ENCODE measurements at regions of chr21 and their contacts with region 1.

Region 1: GRCh38 chr21:32770871-32771523 is 558 bp downstream of the PAXBP1 start:
- DNase-seq: peak in 7 of 10 donors; percentile 5 to 56 (median 38)
- H3K4me3 ChIP-seq: peak overlapping the region; percentile 48 to 97 (median 85)
- H3K27ac ChIP-seq: peak overlapping the region in 57 of 59 donors; percentile 36 to 97 (median 86)
- H3K27me3 ChIP-seq: no peaks in the 10 kb centered on the region
- CTCF ChIP-seq: peak in 2 of 56 donors; percentile 7 to 11

Region 2: GRCh38 chr21:32612075-32612998 is 158.7 kb before region 1 on chr21 and contains the start of gene CFAP298:
- intact Hi-C with region 1: loop called in 1 of 2 experiments (anchors 1 kb)
- DNase-seq: peak; percentile 75 to 94 (median 90)
- H3K4me3 ChIP-seq: peak within 1 kb of the TSS; percentile 64 to 99 (median 94)
- H3K27ac ChIP-seq: peak within 1 kb of the TSS; percentile 14 to 98 (median 90)
- H3K27me3 ChIP-seq: no peaks in the 10 kb centered on the region
- CTCF ChIP-seq: peak in 13 of 56 donors; percentile 3 to 39 (median 22)
- total RNA-seq, gene CFAP298: 25.7 to 54.3 (median 36.0) TPM

Region 3: GRCh38 chr21:32727687-32728455 is 43.1 kb before region 1 on chr21 and contains the start of gene SYNJ1:
- intact Hi-C with region 1: loop called (anchors 1 to 2 kb)
- DNase-seq: peak; percentile 85 to 98 (median 93)
- H3K4me3 ChIP-seq: peak within 1 kb of the TSS; percentile 69 to 100 (median 96)
- H3K27ac ChIP-seq: peak within 1 kb of the TSS; percentile 63 to 98 (median 92)
- H3K27me3 ChIP-seq: no peaks in the 10 kb centered on the region
- CTCF ChIP-seq: peak in 21 of 56 donors; percentile 3 to 47 (median 20)
- total RNA-seq, gene SYNJ1: 60.7 to 224 (median 158) TPM

Region 4: GRCh38 chr21:32826329-32827167 is 55.6 kb after region 1 on chr21:
- intact Hi-C with region 1: loop called in 1 of 2 experiments (anchors 10 kb)
- DNase-seq: peak in 4 of 10 donors; percentile 7 to 57 (median 36)
- H3K4me3 ChIP-seq: no peak overlapping the region
- H3K27ac ChIP-seq: peak overlapping the region in 26 of 59 donors; percentile 9 to 81 (median 62)
- H3K27me3 ChIP-seq: no peaks in the 10 kb centered on the region
- CTCF ChIP-seq: peak; percentile 28 to 82 (median 66)

Measured in dorsolateral prefrontal cortex (tissue), 120 donors.